CD14-positive monocyte (primary cell): ENCODE measurements at regions of chr10 and their contacts with region 1.

Region 1: DNA sequence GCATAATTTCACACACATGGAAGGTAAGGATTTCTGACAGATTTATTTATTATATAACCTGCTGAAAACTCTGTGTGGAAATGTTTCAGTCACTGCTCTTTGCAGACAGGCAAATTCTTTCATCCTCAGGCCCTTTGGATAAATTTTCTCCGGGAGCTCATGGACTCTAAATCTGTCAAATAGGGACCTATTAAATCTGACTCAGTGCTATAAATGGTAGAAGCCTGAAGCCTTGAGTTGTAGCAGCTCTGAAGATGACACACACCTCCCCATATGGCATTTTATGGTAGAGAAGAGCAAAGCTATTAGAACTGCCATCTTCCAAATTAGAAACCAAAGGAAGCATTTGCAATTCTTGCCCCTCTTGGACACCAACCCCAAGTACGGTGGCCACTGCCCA is 808.7 kb downstream of the XPNPEP1 start:
- DNase-seq: no peak
- H3K4me3 ChIP-seq: no peak overlapping the region
- H3K4me3 Mint-ChIP-seq: no peak overlapping the region
- H3K27ac ChIP-seq: no peak overlapping the region
- H3K27ac Mint-ChIP-seq: no peak overlapping the region
- H3K4me1 ChIP-seq: no peaks in the 10 kb centered on the region
- H3K4me1 Mint-ChIP-seq: no peaks in the 10 kb centered on the region
- H3K27me3 ChIP-seq: no peaks in the 10 kb centered on the region
- H3K27me3 Mint-ChIP-seq: no peaks in the 10 kb centered on the region
- CTCF ChIP-seq: no peak

Region 2: DNA sequence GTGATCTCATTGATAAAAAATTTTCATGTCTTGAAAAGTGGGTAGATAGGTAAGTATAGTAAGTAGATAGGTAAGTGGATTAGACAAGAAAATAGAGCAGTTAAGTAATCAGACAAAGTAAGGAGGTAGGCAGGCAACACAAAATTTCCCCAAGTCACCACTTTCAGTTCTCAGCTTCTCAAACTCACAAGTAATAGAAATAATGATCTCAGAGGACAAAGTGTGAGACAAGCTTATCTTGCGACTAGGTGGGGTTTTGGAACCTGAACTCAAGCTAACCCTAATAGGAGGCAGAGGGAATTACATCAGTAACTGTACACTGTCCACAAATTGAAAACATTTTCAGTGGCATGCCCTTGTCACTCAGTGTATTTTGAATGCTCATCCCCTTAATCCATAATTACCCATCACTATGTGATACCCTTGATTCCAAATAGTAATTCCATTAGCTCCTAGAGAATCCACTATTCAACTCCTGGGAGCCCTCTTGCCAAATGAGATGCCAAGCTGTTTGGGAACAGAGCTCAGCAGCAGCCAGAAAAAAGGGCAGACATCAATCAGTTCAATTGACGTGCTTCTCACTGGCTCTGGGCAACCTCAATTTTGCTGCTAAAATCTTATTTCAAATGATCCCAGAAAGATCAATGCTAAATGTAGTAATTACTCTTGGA is 105.5 kb after region 1 on chr10:
- intact Hi-C with region 1: no loop called
- DNase-seq: no peak
- H3K4me3 ChIP-seq: no peak overlapping the region
- H3K4me3 Mint-ChIP-seq: no peak overlapping the region
- H3K27ac ChIP-seq: no peak overlapping the region
- H3K27ac Mint-ChIP-seq: no peak overlapping the region
- H3K4me1 ChIP-seq: no peaks in the 10 kb centered on the region
- H3K4me1 Mint-ChIP-seq: no peaks in the 10 kb centered on the region
- H3K27me3 ChIP-seq: no peaks in the 10 kb centered on the region
- H3K27me3 Mint-ChIP-seq: no peaks in the 10 kb centered on the region
- CTCF ChIP-seq: no peak

Region 3: GRCh38 chr10:109517748-109518147 is 403.2 kb after region 1 on chr10:
- intact Hi-C with region 1: loop called in 1 of 2 experiments (anchors 5 kb)
- DNase-seq: no peak
- H3K4me3 ChIP-seq: no peak overlapping the region
- H3K4me3 Mint-ChIP-seq: no peak overlapping the region
- H3K27ac ChIP-seq: no peak overlapping the region
- H3K27ac Mint-ChIP-seq: no peak overlapping the region
- H3K4me1 ChIP-seq: no peaks in the 10 kb centered on the region
- H3K4me1 Mint-ChIP-seq: no peaks in the 10 kb centered on the region
- H3K27me3 ChIP-seq: no peaks in the 10 kb centered on the region
- H3K27me3 Mint-ChIP-seq: peaks cover 0 to 2% (median 0%) of the 10 kb centered on the region in 3 donors
- CTCF ChIP-seq: no peak